ENCODE measurements at regions of chr4 and their contacts with region 1.

Region 1: GRCh38 chr4:17166954-17167353 is 268.5 kb upstream of the LDB2 start:
- DNase-seq: no peak
- ATAC-seq: peak; percentile 92

Region 2: GRCh38 chr4:17232566-17233253 is 65.8 kb after region 1 on chr4:
- intact Hi-C with region 1: loop called (anchors 2 kb)
- DNase-seq: no peak
- ATAC-seq: peak; percentile 95

Measured in Right ventricle myocardium inferior (tissue), 1 donor.